ENCODE measurements at regions of chr13 and their contacts with region 1.

Region 1: DNA sequence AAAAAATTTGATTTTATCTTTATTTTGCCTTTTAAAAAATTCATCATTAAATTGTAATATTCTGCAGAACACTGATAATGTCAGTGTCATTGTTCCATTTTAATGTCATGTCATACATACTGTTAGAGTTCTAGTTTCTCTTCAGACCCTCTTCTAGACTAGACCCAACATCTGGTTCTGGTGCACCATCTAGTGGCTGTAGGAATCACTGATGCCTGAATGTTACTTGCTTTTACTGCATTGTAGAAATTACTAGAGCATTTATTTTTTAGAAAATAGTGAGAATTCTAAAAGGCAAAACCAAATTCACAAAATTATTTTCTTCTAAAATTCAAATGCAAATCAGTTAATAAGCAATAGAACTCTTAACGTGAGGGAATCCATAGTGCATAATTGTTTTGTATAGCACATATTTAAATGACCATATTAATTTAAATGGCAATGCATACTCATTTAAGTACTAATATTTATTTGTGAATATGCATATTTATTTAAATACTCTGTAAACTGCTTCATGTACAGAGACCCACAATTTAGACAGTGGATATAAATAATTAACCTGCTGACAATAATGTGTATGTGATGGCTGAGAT is 425.7 kb downstream of the KLF12 start:
- DNase-seq: peak in 1 of 3 donors; percentile 82
- ATAC-seq: peak; percentile 91
- H3K4me3 ChIP-seq: no peak overlapping the region
- H3K4me1 ChIP-seq: no peaks in the 10 kb centered on the region
- CTCF ChIP-seq: peak; percentile 26

Region 2: DNA sequence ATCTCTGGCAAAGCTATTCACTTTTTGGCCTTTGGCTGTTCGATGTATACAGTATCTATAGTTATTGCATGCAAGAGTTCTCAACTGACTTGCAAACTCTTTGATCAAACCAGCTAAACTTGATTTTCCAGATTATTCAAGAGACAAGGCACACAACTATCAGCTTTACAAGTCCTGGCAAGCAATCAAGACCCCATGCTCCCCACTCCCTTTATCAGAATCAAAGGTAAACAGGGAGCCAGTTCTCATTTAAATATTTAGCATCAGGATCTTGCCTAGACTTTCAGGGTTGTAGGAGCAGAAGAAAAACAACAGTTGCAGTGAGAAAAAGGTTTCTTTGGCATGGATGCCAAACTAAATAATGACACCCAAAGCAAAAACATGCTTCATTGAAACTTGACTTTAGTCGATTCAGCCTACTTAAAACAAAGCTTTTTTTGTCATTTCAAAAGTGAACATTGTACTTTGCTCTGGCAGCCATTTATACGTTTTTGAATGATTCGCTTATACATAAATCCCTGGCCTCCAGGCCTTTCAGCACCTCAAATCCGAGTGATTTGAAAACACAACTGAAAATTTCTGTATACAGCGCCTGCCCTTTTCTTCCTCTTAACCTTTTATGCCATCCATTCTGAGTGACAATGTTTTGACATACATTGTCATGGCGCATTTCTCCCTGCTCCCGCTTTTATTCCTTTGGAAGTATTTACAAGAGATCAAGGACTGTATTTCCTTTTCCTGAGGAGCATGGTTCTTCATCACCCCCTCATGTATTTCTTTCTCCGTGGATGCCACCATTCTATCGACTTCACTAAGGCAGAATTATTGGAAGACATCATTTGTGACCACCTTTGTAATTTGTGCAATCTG is 308.9 kb before region 1 on chr13:
- intact Hi-C with region 1: loop called in 1 of 2 experiments (anchors 10 kb)
- DNase-seq: peak in 1 of 3 donors; percentile 77
- ATAC-seq: peak; percentile 85
- H3K4me3 ChIP-seq: no peak overlapping the region
- H3K4me1 ChIP-seq: peaks cover 16% of the 10 kb centered on the region
- CTCF ChIP-seq: no peak